GM12878 (cell line): ENCODE measurements at regions of chr14 and their contacts with region 1.

Region 1: DNA sequence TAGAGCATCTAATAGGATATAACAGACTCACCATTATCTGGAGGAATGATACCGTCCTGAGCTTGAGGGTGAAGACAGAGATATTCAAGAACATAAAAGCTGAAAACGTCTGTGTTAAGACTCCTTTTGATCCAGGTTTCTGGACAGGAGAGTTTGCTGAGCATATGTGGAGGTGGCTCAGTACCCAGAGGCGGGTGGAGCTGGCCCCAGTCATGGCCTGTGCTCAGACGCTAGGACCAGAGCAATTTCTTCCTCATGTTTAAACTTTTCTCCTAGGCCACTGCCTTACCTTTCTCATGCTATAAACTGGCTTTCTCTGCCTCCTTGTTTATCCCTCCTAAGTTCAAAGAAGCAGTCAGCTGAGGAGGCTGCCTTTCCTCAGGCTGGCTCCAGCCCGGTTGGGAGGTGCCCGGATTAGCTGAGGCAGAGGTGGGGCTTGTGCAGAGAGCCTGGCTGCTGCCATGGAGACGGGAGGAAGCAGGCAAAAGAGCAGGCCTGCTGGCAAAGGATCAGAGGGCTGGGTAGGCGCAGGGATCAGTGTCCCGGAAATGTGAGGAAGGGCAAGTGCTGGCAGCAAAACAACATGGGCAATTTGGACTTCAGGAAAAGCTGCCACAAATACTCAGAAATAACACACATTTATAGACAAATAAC is 13.7 kb downstream of the COA8 start:
- DNase-seq: no peak
- ATAC-seq: no peak
- H3K4me3 ChIP-seq: no peak overlapping the region
- H3K27ac ChIP-seq: no peak overlapping the region
- H3K4me1 ChIP-seq: no peaks in the 10 kb centered on the region
- H3K27me3 ChIP-seq: no peaks in the 10 kb centered on the region
- CTCF ChIP-seq: no peak
- EP300 ChIP-seq: no peak
- POLR2A ChIP-seq: no peak
- RAD21 ChIP-seq: no peak

Region 2: GRCh38 chr14:103500148-103500990 is 76.1 kb before region 1 on chr14:
- CTCF ChIA-PET with region 1: no interaction called
- POLR2A ChIA-PET with region 1: no interaction called
- RAD21 ChIA-PET with region 1: no interaction called
- SMC1A ChIA-PET with region 1: no interaction called
- in situ Hi-C with region 1: no loop called
- intact Hi-C with region 1: no loop called
- DNase-seq: no peak
- ATAC-seq: peak; percentile 99
- H3K4me3 ChIP-seq: no peak overlapping the region
- H3K27ac ChIP-seq: no peak overlapping the region
- H3K4me1 ChIP-seq: no peaks in the 10 kb centered on the region
- H3K27me3 ChIP-seq: no peaks in the 10 kb centered on the region
- CTCF ChIP-seq: peak; percentile 81 to 94 (median 88)
- EP300 ChIP-seq: no peak
- POLR2A ChIP-seq: no peak
- RAD21 ChIP-seq: peak; percentile 42; the same call in 1 of the 2 replicates

Region 3: GRCh38 chr14:103679351-103679750 is 102.9 kb after region 1 on chr14:
- CTCF ChIA-PET with region 1: interaction called, 9 read pairs
- POLR2A ChIA-PET with region 1: no interaction called
- RAD21 ChIA-PET with region 1: interaction called, 5 read pairs
- SMC1A ChIA-PET with region 1: interaction called, 8 read pairs
- in situ Hi-C with region 1: loop called (anchors 5 kb)
- intact Hi-C with region 1: loop called (anchors 1 kb)
- DNase-seq: peak; percentile 34
- ATAC-seq: peak; percentile 100
- H3K4me3 ChIP-seq: no peak overlapping the region
- H3K27ac ChIP-seq: no peak overlapping the region; the same call in 1 of the 2 replicates
- H3K4me1 ChIP-seq: no peaks in the 10 kb centered on the region
- H3K27me3 ChIP-seq: no peaks in the 10 kb centered on the region
- CTCF ChIP-seq: peak; percentile 58 to 88 (median 78)
- EP300 ChIP-seq: no peak
- POLR2A ChIP-seq: peak; percentile 53; the same call in 1 of the 2 replicates
- RAD21 ChIP-seq: peak; percentile 42; the same call in 1 of the 2 replicates

Region 4: GRCh38 chr14:103688906-103689902 is 112.7 kb after region 1 on chr14:
- CTCF ChIA-PET with region 1: no interaction called
- POLR2A ChIA-PET with region 1: no interaction called
- RAD21 ChIA-PET with region 1: no interaction called
- SMC1A ChIA-PET with region 1: interaction called, 3 read pairs
- in situ Hi-C with region 1: loop called (anchors 5 kb)
- intact Hi-C with region 1: loop called (anchors 2 kb)
- DNase-seq: peak; percentile 53
- ATAC-seq: peak; percentile 76
- H3K4me3 ChIP-seq: peak overlapping the region; percentile 43; the same call in 1 of the 2 replicates
- H3K27ac ChIP-seq: peak overlapping the region; percentile 97
- H3K4me1 ChIP-seq: peaks cover 38% of the 10 kb centered on the region
- H3K27me3 ChIP-seq: no peaks in the 10 kb centered on the region
- CTCF ChIP-seq: no peak
- EP300 ChIP-seq: no peak
- POLR2A ChIP-seq: 0 out of 2 replicates have a peak, but pooled peaks have one; percentile 55
- RAD21 ChIP-seq: no peak

Region 5: DNA sequence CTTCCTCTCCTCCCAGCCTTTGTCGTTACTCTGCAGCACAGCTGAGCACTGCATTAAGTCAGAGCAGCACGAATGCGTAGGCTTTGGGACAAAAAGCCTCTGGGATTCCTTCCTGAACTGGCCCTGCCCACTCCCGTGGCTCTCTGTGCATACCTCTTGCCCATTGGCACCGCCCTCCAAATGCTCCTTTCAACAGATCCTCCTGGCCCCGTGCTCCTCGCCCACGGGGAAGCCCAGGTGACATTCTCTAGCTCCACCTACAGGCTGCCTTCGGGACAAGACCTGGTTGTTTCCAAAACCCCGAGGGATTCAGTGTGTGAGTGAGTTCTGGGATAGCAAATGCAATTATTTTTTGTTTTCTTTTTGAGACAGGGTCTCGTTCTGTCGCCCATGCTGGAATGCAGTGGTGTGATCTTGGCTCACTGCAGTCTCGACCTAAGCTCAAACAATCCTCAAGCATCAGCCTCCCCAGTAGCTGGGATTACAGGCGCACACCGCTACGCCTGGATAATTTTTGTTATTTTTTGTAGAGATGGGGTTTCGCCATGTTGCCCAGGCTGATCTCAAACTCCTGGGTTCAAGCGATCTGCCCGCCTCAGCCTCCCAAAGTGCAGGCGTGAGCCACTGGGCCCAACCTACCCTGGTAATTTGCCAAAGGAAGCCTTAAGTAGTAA is 333.9 kb after region 1 on chr14:
- CTCF ChIA-PET with region 1: no interaction called
- POLR2A ChIA-PET with region 1: no interaction called
- RAD21 ChIA-PET with region 1: no interaction called
- SMC1A ChIA-PET with region 1: no interaction called
- in situ Hi-C with region 1: no loop called
- intact Hi-C with region 1: loop called (anchors 10 kb)
- DNase-seq: peak; percentile 9
- ATAC-seq: peak; percentile 89
- H3K4me3 ChIP-seq: no peak overlapping the region
- H3K27ac ChIP-seq: no peak overlapping the region
- H3K4me1 ChIP-seq: no peaks in the 10 kb centered on the region
- H3K27me3 ChIP-seq: no peaks in the 10 kb centered on the region
- CTCF ChIP-seq: peak; percentile 69 to 80 (median 74)
- EP300 ChIP-seq: no peak
- POLR2A ChIP-seq: peak; percentile 34; the same call in 1 of the 2 replicates
- RAD21 ChIP-seq: peak; percentile 84